Activated CD8-positive, alpha-beta memory T cell treated with anti-CD3 and anti-CD28 coated beads, Interleukin-2, amount 10 ng/mL, durations not matched to agents 7 days and 5 days (primary cell): ENCODE measurements at regions of chr21 and their contacts with region 1.

Region 1: GRCh38 chr21:31198575-31198974 is 145.5 kb downstream of the TIAM1 start:
- DNase-seq: no peak
- ATAC-seq: no peak
- H3K4me3 Mint-ChIP-seq: no peak overlapping the region
- H3K27ac Mint-ChIP-seq: no peak overlapping the region
- H3K4me1 Mint-ChIP-seq: peaks cover 24% of the 10 kb centered on the region
- H3K27me3 Mint-ChIP-seq: peaks cover 20% of the 10 kb centered on the region

Region 2: GRCh38 chr21:31265366-31266013 is 66.9 kb after region 1 on chr21:
- CTCF ChIA-PET with region 1: no interaction called
- DNase-seq: no peak
- ATAC-seq: no peak
- H3K4me3 Mint-ChIP-seq: no peak overlapping the region
- H3K27ac Mint-ChIP-seq: no peak overlapping the region
- H3K4me1 Mint-ChIP-seq: peaks cover 7% of the 10 kb centered on the region
- H3K27me3 Mint-ChIP-seq: peaks cover 12% of the 10 kb centered on the region

Region 3: DNA sequence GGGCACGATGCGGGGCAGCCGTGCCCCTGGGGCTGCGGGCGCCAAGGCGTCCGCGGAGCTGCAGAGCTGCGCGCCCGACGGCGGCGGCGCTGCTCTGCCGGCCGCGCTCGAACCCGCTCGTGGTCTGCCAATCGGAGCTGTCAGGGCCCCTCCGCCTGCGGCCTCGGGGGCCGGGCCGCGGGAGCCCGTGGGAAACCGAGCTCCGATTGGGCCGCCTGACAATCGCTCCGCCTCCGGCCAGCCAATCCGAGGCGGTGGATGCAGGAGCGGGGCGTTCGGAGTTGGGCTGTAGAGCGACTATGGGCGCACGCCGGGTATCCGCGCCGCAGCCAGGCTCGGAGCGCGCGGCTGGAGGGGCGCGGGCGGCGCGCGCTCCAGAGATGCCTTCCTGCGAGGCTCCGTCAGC is 360.4 kb after region 1 on chr21:
- CTCF ChIA-PET with region 1: interaction called, 17 read pairs
- DNase-seq: peak; percentile 92
- ATAC-seq: peak; percentile 91
- H3K4me3 Mint-ChIP-seq: peak overlapping the region; percentile 78
- H3K27ac Mint-ChIP-seq: no peak overlapping the region
- H3K4me1 Mint-ChIP-seq: peaks cover 36% of the 10 kb centered on the region
- H3K27me3 Mint-ChIP-seq: peaks cover 54% of the 10 kb centered on the region

Region 4: GRCh38 chr21:31580866-31581276 is 382.3 kb after region 1 on chr21:
- CTCF ChIA-PET with region 1: interaction called, 85 read pairs
- DNase-seq: peak; percentile 79
- ATAC-seq: peak; percentile 79
- H3K4me3 Mint-ChIP-seq: no peak overlapping the region
- H3K27ac Mint-ChIP-seq: no peak overlapping the region
- H3K4me1 Mint-ChIP-seq: no peaks in the 10 kb centered on the region
- H3K27me3 Mint-ChIP-seq: peaks cover 29% of the 10 kb centered on the region